ENCODE measurements at regions of chr1 and their contacts with region 1.

Region 1: GRCh38 chr1:108559215-108560186 is at the start of gene EEIG2:
- DNase-seq: peak; percentile 86 to 95 (median 89)
- ATAC-seq: peak; percentile 92
- H3K4me3 ChIP-seq: peak within 1 kb of the TSS; percentile 56 to 72
- H3K4me3 Mint-ChIP-seq: peak within 1 kb of the TSS; percentile 94
- H3K27ac ChIP-seq: peak within 1 kb of the TSS; percentile 41 to 69
- H3K27ac Mint-ChIP-seq: peak within 1 kb of the TSS; percentile 93
- H3K4me1 ChIP-seq: peaks cover 27% of the 10 kb centered on the region
- H3K4me1 Mint-ChIP-seq: peaks cover 45% of the 10 kb centered on the region
- H3K27me3 ChIP-seq: no peaks in the 10 kb centered on the region
- H3K27me3 Mint-ChIP-seq: no peaks in the 10 kb centered on the region
- CTCF ChIP-seq: peak; percentile 69
- total RNA-seq, gene EEIG2: 11.0 to 11.5 TPM

Region 2: DNA sequence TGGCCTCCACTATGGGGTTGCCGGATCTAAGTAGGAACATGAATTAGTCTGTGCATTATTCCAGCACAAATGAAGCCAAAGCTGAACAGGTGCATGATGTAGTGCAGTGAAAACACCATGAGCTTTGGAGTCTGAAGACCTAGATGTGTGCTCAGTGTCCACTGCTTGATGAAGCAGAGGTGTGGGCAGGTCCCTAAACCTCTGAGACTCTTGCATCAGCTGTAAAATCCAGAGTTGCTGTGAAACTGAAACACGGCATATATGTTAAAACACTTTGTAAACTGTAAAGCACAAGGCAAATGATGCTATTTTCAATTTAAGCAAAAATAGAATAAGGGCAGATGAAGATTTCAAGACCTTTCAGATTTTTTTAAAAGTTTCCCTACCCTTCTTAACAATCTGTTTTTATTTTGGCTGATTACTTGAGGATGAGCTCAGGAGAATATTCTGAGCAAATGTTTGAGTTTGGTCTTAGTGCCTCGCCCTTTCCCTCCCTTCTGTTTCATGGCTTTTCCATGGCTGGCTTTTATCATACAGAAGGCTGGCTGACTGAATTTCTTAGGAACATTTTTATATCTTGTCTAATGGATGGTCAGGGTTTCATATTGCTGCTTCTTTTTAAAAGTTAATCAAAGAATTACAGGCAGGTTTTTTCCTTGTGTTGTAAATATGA is 1196.9 kb before region 1 on chr1:
- CTCF ChIA-PET with region 1: no interaction called
- POLR2A ChIA-PET with region 1: no interaction called
- intact Hi-C with region 1: no loop called
- DNase-seq: no peak
- ATAC-seq: no peak
- H3K4me3 ChIP-seq: no peak overlapping the region
- H3K4me3 Mint-ChIP-seq: no peak overlapping the region
- H3K27ac ChIP-seq: no peak overlapping the region
- H3K27ac Mint-ChIP-seq: no peak overlapping the region
- H3K4me1 ChIP-seq: no peaks in the 10 kb centered on the region
- H3K4me1 Mint-ChIP-seq: no peaks in the 10 kb centered on the region
- H3K27me3 ChIP-seq: no peaks in the 10 kb centered on the region
- H3K27me3 Mint-ChIP-seq: no peaks in the 10 kb centered on the region
- CTCF ChIP-seq: no peak

Region 3: DNA sequence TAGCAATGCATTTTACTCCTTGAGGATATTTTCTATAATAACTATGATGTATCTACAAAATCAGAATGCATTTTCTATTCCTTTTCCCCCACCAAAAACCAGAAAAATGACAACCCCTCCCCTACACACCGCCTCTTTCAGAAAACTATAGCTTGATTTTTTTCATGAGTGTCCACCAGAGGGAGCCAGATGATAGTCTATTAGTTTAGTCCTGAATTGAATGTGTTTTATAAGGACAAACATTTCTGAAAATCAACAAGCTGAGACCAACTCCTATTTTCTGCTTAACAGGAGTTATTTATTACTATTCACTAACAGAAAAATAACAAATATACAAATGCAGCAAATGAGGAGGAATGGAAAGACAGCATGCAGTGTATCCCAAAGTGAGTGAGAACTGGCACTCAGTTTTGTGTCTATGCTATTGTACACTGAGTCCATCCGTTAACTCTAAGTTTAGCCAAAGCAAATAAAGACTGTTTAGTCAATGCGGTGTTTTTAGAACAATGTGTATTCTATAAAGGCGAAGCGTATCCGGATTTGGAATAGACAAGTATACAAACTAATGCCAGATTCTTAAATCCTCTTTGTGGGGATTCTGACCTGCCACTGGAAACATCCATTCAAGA is 777.2 kb before region 1 on chr1:
- CTCF ChIA-PET with region 1: no interaction called
- POLR2A ChIA-PET with region 1: no interaction called
- intact Hi-C with region 1: loop called (anchors 1 to 10 kb)
- DNase-seq: peak in 5 of 9 experiments; percentile 25 to 82 (median 64)
- ATAC-seq: no peak
- H3K4me3 ChIP-seq: no peak overlapping the region
- H3K4me3 Mint-ChIP-seq: no peak overlapping the region
- H3K27ac ChIP-seq: no peak overlapping the region
- H3K27ac Mint-ChIP-seq: no peak overlapping the region
- H3K4me1 ChIP-seq: peaks cover 29% of the 10 kb centered on the region
- H3K4me1 Mint-ChIP-seq: peaks cover 36% of the 10 kb centered on the region
- H3K27me3 ChIP-seq: no peaks in the 10 kb centered on the region
- H3K27me3 Mint-ChIP-seq: no peaks in the 10 kb centered on the region
- CTCF ChIP-seq: peak; percentile 91

Region 4: GRCh38 chr1:108512239-108512981 is 47.1 kb before region 1 on chr1:
- CTCF ChIA-PET with region 1: interaction called, 137 read pairs
- POLR2A ChIA-PET with region 1: interaction called, 12 read pairs
- intact Hi-C with region 1: loop called (anchors 1 kb)
- DNase-seq: peak in 2 of 9 experiments; percentile 65 to 75
- ATAC-seq: peak; percentile 69
- H3K4me3 ChIP-seq: no peak overlapping the region
- H3K4me3 Mint-ChIP-seq: no peak overlapping the region
- H3K27ac ChIP-seq: no peak overlapping the region
- H3K27ac Mint-ChIP-seq: no peak overlapping the region
- H3K4me1 ChIP-seq: no peaks in the 10 kb centered on the region
- H3K4me1 Mint-ChIP-seq: no peaks in the 10 kb centered on the region
- H3K27me3 ChIP-seq: no peaks in the 10 kb centered on the region
- H3K27me3 Mint-ChIP-seq: peaks cover 21% of the 10 kb centered on the region
- CTCF ChIP-seq: peak; percentile 99

Region 5: GRCh38 chr1:108590957-108591356 is 31.5 kb after region 1 on chr1:
- CTCF ChIA-PET with region 1: interaction called, 5 read pairs
- POLR2A ChIA-PET with region 1: no interaction called
- intact Hi-C with region 1: loop called in 1 of 2 experiments (anchors 2 kb)
- DNase-seq: peak in 3 of 9 experiments; percentile 28 to 90 (median 84)
- ATAC-seq: peak; percentile 82
- H3K4me3 ChIP-seq: no peak overlapping the region
- H3K4me3 Mint-ChIP-seq: no peak overlapping the region
- H3K27ac ChIP-seq: peak overlapping the region; percentile 16 to 83
- H3K27ac Mint-ChIP-seq: no peak overlapping the region
- H3K4me1 ChIP-seq: peaks cover 19% of the 10 kb centered on the region
- H3K4me1 Mint-ChIP-seq: peaks cover 43% of the 10 kb centered on the region
- H3K27me3 ChIP-seq: no peaks in the 10 kb centered on the region
- H3K27me3 Mint-ChIP-seq: no peaks in the 10 kb centered on the region
- CTCF ChIP-seq: no peak

Region 6: GRCh38 chr1:108661030-108661620 is 101.6 kb after region 1 on chr1 and contains the start of gene HENMT1:
- CTCF ChIA-PET with region 1: interaction called, 6 read pairs
- POLR2A ChIA-PET with region 1: interaction called, 22 read pairs
- intact Hi-C with region 1: loop called in 1 of 2 experiments (anchors 1 kb)
- DNase-seq: peak; percentile 62 to 95 (median 82)
- ATAC-seq: peak; percentile 84
- H3K4me3 ChIP-seq: peak within 1 kb of the TSS; percentile 57 to 66
- H3K4me3 Mint-ChIP-seq: peak within 1 kb of the TSS; percentile 81
- H3K27ac ChIP-seq: peak within 1 kb of the TSS; percentile 90 to 98
- H3K27ac Mint-ChIP-seq: peak within 1 kb of the TSS; percentile 97
- H3K4me1 ChIP-seq: peaks cover 24% of the 10 kb centered on the region
- H3K4me1 Mint-ChIP-seq: peaks cover 50% of the 10 kb centered on the region
- H3K27me3 ChIP-seq: no peaks in the 10 kb centered on the region
- H3K27me3 Mint-ChIP-seq: no peaks in the 10 kb centered on the region
- CTCF ChIP-seq: no peak
- total RNA-seq, gene HENMT1: 7.5 to 8.3 TPM

Region 7: GRCh38 chr1:108897865-108898720 is 338.6 kb after region 1 on chr1:
- CTCF ChIA-PET with region 1: interaction called, 3 read pairs
- POLR2A ChIA-PET with region 1: interaction called, 4 read pairs
- intact Hi-C with region 1: loop called in 1 of 2 experiments (anchors 1 kb)
- DNase-seq: peak in 5 of 9 experiments; percentile 9 to 74 (median 35)
- ATAC-seq: peak; percentile 78
- H3K4me3 ChIP-seq: no peak overlapping the region
- H3K4me3 Mint-ChIP-seq: no peak overlapping the region
- H3K27ac ChIP-seq: no peak overlapping the region
- H3K27ac Mint-ChIP-seq: no peak overlapping the region
- H3K4me1 ChIP-seq: no peaks in the 10 kb centered on the region
- H3K4me1 Mint-ChIP-seq: no peaks in the 10 kb centered on the region
- H3K27me3 ChIP-seq: no peaks in the 10 kb centered on the region
- H3K27me3 Mint-ChIP-seq: peaks cover 2% of the 10 kb centered on the region
- CTCF ChIP-seq: peak; percentile 68